Mammary epithelial cell (primary cell): ENCODE measurements at regions of chr6 and their contacts with region 1.

Region 1: GRCh38 chr6:24666641-24667377 is at the starts of genes ACOT13 and TDP2:
- DNase-seq: peak; percentile 96
- H3K4me3 ChIP-seq: peak within 1 kb of the TSS; percentile 69 to 94 (median 93)
- H3K27ac ChIP-seq: peak within 1 kb of the TSS; percentile 83
- H3K4me1 ChIP-seq: peaks cover 20% of the 10 kb centered on the region
- H3K27me3 ChIP-seq: no peaks in the 10 kb centered on the region
- CTCF ChIP-seq: peak; percentile 35 to 44
- total RNA-seq, gene ACOT13: 4.8 to 32.5 TPM
- total RNA-seq, gene TDP2: 16.3 to 28.5 TPM

Region 2: DNA sequence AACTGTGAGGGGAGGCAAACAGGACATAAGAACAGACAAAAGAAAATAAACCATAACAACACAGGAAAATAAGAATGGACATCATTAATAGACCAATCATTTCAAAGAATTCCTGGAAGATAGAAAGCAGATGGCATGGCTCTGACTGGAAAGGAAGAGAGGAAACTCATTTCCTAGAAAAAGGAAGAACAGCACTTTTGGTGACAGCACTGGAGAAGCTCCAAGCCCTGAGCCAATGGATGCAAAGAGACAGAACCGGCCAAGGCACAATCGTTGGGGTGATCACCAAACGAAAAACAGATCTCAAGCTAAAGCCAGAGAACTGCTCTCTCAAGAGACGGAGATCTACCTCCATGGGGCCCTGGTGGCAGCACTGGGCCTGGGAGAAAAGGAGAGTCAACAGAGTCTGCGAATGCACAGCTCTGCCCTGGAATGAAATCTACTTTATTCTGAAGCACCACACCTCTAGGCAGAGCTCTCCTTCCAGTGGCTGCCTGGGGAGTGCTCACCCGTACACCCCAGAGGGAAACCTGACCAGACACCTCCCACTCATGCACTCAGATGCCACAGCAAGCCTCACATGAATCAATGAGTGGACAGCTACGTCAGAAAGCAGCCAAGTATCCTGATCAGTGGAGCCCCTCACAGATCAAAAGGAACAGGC is 45.1 kb before region 1 on chr6:
- CTCF ChIA-PET with region 1: no interaction called
- dilution Hi-C with region 1: no loop called
- in situ Hi-C with region 1: no loop called
- intact Hi-C with region 1: no loop called
- DNase-seq: no peak
- H3K4me3 ChIP-seq: no peak overlapping the region
- H3K27ac ChIP-seq: no peak overlapping the region
- H3K4me1 ChIP-seq: no peaks in the 10 kb centered on the region
- H3K27me3 ChIP-seq: no peaks in the 10 kb centered on the region
- CTCF ChIP-seq: no peak

Region 3: DNA sequence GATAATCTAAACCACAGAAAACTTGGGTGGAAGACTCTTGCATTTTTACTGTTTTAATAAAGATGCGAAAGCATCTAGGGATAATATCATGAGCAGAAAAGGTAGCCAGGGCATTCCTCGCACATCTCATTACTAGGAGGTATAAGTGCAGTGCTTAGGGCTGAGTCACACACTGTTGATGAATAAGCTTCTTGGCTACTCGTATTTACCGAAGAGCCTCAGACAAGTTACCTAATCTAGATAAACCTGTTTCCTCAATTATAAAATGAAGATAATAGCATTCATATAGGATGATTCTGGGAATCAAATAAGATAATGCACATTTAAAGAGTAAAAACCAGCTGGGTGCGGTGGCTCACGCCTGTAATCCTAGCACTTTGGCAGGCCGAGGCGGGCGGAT is 20.0 kb before region 1 on chr6:
- CTCF ChIA-PET with region 1: no interaction called
- dilution Hi-C with region 1: no loop called
- in situ Hi-C with region 1: no loop called
- intact Hi-C with region 1: loop called (anchors 2 kb)
- DNase-seq: peak; percentile 51
- H3K4me3 ChIP-seq: no peak overlapping the region
- H3K27ac ChIP-seq: no peak overlapping the region
- H3K4me1 ChIP-seq: peaks cover 13% of the 10 kb centered on the region
- H3K27me3 ChIP-seq: no peaks in the 10 kb centered on the region
- CTCF ChIP-seq: no peak

Region 4: DNA sequence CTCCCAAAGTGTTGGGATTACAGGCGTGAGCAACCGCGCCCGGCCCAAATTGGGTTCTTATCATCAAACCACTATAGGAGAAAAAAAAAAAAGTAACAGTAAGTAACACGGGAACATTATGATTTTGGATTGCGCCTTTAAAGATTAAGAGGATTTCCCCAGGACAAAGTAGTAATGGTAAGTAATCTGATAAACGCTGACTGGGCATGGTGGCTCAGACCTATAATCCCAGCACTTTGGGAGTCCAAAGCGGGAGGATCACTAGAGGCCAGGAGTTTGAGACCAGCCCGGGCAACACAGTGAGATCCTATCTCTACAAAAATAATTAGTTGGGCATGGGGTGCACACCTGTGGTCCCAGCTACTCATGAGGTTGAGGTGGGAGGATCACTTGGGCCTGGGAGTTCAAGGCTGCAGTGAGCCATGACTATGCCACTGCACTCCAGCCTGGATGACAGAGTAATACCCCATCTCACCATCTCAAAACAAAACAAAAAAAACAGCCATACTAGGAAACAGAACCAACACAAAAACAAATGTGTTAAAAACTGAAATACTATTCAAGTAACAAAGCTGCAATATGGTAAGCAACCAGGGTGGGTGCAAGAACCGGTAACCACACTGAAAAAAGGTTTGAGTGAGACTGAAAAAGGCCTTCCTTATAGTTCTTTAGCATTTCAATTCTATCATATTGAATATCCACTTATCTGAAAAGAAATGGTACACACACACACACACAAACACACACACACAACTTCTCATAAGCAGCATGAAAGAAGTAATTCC is 43.9 kb after region 1 on chr6:
- CTCF ChIA-PET with region 1: no interaction called
- dilution Hi-C with region 1: no loop called
- in situ Hi-C with region 1: no loop called
- intact Hi-C with region 1: no loop called
- DNase-seq: no peak
- H3K4me3 ChIP-seq: no peak overlapping the region
- H3K27ac ChIP-seq: no peak overlapping the region
- H3K4me1 ChIP-seq: no peaks in the 10 kb centered on the region
- H3K27me3 ChIP-seq: no peaks in the 10 kb centered on the region
- CTCF ChIP-seq: no peak